Mucosa of descending colon (tissue), 3 donors: ENCODE measurements at regions of chr14 and their contacts with region 1.

Region 1: DNA sequence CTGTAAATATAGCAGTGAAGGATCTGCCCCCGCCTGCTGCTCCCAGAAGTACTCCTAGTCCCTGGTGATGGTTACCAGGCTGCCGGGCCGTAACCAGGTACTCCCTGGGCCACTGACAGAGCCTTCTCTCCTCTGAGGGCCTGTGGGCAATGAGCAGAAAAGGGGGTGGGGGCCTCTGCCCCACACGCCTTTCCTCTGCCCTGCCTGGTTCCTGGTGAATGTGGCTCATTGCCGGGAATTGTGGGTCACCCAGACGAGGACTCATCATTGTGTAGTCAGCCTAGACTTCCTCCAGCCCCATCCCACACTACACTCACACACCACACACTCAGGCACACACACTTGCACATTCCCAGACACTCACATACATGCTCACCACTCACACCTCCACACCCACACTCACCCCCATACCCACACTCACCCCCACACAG is 35.7 kb upstream of the ACTN1 start:
- DNase-seq: no peak
- ATAC-seq: no peak
- H3K4me3 ChIP-seq: no peak overlapping the region
- H3K4me1 ChIP-seq: peaks cover 19% of the 10 kb centered on the region
- CTCF ChIP-seq: no peak

Region 2: GRCh38 chr14:69117020-69117767 is 102.3 kb after region 1 on chr14:
- intact Hi-C with region 1: no loop called
- DNase-seq: no peak
- ATAC-seq: no peak
- H3K4me3 ChIP-seq: no peak overlapping the region
- H3K4me1 ChIP-seq: no peaks in the 10 kb centered on the region
- CTCF ChIP-seq: no peak

Region 3: DNA sequence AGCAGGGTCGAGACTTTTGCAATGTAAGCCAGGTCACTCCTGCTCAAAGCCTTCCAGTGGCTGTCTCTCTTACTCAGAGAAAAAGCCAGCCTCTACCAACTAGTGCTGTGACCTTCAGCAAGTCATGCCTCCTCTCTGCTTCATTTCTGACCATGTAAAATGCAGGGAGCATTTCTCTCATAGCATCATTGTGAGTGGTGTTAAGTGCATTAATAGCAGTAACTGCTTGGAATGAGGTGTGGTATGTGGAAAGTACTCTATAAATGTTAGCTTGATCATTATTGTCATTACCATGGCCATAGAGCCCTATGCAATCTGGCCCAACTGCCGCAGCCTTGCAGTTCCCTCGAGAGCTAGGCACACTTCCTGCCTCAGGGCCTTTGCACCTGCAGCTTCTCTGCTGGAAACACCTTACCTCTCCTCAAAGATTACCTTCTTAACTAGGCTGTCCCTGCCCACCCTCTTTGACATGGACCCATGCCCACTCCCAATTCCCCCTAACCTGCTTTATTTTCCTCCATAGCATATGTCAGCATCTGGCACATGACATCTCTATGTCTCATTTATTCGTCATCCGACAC is 480.6 kb after region 1 on chr14:
- intact Hi-C with region 1: loop called in 1 of 2 experiments (anchors 5 kb)
- DNase-seq: no peak
- ATAC-seq: no peak
- H3K4me3 ChIP-seq: no peak overlapping the region
- H3K4me1 ChIP-seq: no peaks in the 10 kb centered on the region
- CTCF ChIP-seq: no peak